ENCODE measurements at regions of chr17 and their contacts with region 1.

Region 1: DNA sequence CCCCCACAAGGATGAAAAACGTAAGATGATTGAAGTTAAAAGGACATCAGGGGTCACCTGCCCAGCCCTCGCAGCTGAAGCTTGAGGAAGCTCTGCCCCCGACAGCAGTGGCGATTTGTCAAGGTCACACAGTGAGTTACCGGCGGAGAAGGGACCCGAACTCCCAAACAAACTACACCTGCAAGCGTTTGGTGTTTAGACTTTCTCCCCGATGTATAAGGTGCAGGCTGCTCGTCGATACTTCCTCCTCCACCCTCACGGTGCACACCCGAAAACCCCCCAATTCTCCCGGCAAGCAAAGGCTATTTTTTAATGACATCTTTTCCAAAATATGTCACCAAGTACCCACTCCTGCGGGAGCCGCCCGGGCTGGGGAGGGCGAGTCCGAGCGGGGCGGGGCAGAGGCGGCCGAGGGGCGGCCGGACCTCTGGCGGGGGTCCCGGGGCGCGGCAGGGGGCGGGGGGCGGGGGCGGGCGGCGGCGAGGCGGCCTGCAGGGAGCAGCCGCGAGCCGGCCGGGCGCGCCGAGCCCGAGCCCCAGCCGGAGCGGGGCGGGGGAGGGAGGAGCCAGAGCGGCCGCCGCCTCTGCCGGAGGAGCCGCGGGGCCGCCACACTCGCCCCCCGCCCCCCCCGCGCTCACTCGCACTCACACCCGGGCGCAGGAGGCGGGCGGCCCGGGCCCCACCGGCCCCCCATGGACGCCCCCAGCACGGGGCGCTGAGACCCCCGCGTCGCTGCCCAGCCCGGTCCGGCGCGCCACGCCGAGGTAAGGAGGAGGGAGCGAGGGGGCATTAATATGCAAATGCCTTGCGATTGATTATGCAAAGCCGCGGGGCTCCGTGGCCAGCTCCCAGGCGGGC is at the start of gene THRA:
- DNase-seq: peak; percentile 84
- ATAC-seq: peak; percentile 75
- total RNA-seq, gene THRA: 80.0 TPM

Region 2: DNA sequence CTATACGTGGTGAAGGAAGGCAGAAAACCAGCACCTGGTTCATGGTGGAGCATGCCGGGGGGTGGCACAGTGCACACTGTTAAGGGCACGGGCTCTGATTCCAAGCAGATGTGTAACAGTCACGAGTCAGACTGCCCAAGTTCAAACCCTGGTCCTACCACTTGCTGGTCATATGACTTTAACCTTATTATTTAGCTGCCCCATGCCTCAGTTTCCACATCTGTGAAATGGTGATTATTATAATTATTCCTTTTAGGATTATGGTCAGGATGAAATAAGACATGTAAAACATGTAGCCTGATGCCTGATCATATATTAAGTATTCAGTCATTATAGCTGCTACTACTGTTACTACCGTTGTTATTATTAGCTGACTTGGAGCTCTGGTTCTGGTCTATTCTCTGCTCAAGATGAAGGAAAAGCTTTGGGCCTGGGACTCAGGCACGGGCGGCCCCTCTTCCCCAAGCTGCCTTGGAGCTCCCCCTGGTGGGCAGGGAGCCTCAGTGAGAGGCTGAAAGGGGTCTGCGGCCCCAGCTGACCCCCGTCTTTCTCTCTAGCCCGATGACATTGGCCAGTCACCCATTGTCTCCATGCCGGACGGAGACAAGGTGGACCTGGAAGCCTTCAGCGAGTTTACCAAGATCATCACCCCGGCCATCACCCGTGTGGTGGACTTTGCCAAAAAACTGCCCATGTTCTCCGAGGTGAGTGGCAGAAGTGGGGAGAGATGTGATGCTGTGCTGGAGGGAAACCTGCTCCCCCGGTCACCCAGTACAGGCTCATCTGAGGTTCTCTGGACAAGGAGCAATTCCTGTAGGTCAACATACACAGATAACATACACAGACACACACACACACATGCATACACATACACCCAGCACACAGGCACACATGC is 23.8 kb after region 1 on chr17:
- intact Hi-C with region 1: loop called (anchors 2 kb)
- DNase-seq: peak; percentile 77
- ATAC-seq: peak; percentile 57

Region 3: GRCh38 chr17:40113110-40113906 is 50.8 kb after region 1 on chr17:
- intact Hi-C with region 1: loop called (anchors 2 kb)
- DNase-seq: peak; percentile 92
- ATAC-seq: peak; percentile 75